H1 (cell line): ENCODE measurements at regions of chr12 and their contacts with region 1.

Region 1: DNA sequence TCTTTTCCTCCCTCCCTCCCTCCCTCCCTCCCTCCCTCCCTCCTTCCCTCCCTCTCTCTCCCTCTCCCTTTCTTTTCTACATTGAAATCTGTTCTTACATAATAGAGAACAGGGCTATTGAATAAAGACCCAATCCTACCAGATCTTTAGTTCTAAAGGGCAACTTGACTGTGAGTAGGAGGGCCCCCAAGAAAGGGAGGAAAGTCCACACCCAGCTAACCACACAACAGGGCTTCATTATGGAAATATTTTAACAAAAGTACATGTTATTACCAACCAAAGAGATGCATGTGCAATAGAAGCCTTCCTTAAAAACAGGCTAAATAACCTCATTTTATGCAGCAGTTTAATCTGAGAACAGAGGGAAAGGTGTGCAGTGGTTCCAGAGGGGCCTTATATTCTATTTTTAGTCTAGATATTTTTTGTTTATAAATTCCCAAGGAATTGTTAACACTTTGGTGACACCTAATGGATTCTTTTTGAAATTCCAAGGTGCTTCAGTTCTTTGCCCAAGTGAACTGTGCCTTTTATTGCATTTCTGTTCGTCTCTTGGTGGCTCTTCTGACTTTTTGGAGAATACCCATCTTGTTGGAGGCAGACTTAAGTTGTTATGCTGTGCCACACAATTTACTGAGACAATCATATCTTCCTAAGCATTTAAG is 63.0 kb downstream of the GNS start:
- DNase-seq: no peak
- H3K4me3 ChIP-seq: no peak overlapping the region
- H3K27ac ChIP-seq: no peak overlapping the region
- H3K4me1 ChIP-seq: peaks cover 4 to 30% (median 20%) of the 10 kb centered on the region in 4 experiments
- H3K27me3 ChIP-seq: no peaks in the 10 kb centered on the region
- CTCF ChIP-seq: peak in 2 of 3 experiments; percentile 5 to 19; a peak in 1 of 4 replicates
- EP300 ChIP-seq: no peak
- POLR2A ChIP-seq: no peak
- RAD21 ChIP-seq: peak; percentile 48 to 60

Region 2: DNA sequence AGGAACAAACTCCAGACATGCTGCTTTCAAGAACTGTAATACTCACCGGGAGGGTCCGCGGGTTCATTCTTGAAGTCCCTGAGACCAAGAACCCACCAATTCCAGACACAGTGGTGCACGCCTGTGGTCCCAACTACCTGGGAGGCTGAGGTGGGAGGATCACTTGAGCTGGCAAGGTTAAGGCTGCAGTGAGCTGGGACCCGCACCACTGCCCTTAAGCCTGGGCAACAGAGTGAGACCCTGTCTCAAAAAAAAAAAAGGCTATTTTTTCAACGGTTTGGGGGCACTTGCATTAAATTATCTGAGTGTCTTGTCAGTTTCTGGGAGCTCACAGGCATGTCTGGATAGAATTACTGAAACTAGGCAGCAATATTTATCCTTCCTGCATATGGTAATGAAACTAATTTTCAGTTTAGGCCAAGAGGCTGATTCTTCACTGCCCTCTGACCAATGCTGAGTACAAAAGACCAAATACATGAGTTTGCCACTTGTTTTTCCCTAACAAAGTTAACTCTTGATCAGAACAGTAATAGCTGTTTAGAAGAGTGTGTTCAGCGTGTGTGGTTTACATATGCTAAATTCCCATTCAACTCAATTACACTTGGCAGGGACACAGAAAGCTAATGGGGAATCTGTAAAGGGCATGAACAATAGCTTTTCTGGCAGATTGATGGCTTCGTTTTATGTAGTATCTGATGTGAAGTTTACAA is 151.7 kb before region 1 on chr12:
- CTCF ChIA-PET with region 1: interaction called, 132 read pairs
- POLR2A ChIA-PET with region 1: no interaction called
- DNase-seq: no peak
- H3K4me3 ChIP-seq: no peak overlapping the region
- H3K27ac ChIP-seq: no peak overlapping the region
- H3K4me1 ChIP-seq: peaks cover 0 to 3% (median 0%) of the 10 kb centered on the region in 4 experiments; a peak in 1 of 7 replicates
- H3K27me3 ChIP-seq: no peaks in the 10 kb centered on the region
- CTCF ChIP-seq: no peak
- EP300 ChIP-seq: no peak
- POLR2A ChIP-seq: no peak
- RAD21 ChIP-seq: no peak

Region 3: DNA sequence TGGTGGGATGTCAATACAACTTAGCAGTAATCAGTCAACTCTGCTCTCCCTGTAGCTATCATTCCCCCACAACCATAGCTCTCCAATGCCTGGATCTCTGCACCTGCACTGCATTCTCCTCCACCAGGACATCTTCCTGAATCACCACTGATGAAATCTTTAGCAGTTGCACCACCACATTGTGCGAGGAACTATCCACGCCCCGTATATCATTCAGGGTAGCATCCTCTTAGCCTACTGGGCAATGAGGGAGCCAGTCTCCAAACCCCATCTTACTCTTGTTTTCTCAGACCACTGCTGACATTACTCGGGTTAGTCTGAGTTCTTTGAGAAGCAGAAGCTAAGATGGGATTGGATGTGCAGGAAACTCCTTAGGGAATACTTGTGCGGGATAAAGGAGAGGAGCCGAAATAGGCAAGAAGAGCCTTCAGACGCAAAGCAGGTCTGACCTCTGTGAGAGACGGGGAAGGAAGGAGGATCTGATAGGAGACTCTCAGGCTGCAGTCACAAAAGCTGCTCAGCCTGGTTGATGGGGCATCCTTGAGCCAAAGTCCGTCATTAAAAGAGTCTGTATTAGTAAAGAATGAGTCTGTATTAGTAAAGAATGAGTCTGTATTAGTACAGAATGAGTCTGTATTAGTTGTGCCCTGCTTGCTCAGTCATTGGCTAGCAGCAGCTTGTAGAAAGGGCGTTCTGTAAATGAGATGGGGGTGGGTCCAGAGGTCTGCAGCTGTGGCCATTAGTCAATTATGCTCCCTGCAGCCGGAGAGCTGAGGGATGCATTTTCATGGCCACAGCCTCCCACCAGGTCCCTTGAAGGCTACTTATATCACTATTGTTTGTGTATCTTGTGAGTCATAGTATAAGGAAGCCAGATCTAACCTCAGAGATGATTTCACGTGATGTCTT is 135.6 kb before region 1 on chr12:
- CTCF ChIA-PET with region 1: interaction called, 32 read pairs
- POLR2A ChIA-PET with region 1: no interaction called
- DNase-seq: peak in 1 of 2 experiments; percentile 46
- H3K4me3 ChIP-seq: no peak overlapping the region
- H3K27ac ChIP-seq: no peak overlapping the region
- H3K4me1 ChIP-seq: peaks cover 0 to 8% (median 2%) of the 10 kb centered on the region in 4 experiments; a peak in 2 of 7 replicates
- H3K27me3 ChIP-seq: no peaks in the 10 kb centered on the region
- CTCF ChIP-seq: no peak
- EP300 ChIP-seq: no peak
- POLR2A ChIP-seq: no peak
- RAD21 ChIP-seq: no peak

Region 4: DNA sequence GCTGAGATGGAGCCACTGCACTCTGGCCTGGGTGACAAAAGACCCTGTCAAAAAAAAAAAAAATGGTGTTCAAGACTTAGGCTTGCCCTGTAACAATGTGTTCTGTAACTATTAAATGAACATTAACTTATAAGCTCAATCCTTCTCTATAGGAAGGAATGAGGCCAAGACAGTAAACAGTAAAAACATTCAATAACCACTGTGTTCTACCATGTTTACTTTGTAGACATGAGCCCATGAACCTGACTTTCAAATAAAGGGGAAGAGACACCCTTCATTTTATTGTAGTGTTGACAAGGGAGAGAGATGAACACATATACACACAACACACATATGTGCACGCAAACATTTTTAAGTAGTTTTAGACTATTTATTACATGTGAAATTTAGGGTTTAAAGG is 106.0 kb before region 1 on chr12:
- CTCF ChIA-PET with region 1: interaction called, 12 read pairs
- POLR2A ChIA-PET with region 1: no interaction called
- DNase-seq: no peak
- H3K4me3 ChIP-seq: no peak overlapping the region
- H3K27ac ChIP-seq: no peak overlapping the region
- H3K4me1 ChIP-seq: no peaks in the 10 kb centered on the region
- H3K27me3 ChIP-seq: no peaks in the 10 kb centered on the region
- CTCF ChIP-seq: no peak
- EP300 ChIP-seq: no peak
- POLR2A ChIP-seq: no peak
- RAD21 ChIP-seq: no peak

Region 5: DNA sequence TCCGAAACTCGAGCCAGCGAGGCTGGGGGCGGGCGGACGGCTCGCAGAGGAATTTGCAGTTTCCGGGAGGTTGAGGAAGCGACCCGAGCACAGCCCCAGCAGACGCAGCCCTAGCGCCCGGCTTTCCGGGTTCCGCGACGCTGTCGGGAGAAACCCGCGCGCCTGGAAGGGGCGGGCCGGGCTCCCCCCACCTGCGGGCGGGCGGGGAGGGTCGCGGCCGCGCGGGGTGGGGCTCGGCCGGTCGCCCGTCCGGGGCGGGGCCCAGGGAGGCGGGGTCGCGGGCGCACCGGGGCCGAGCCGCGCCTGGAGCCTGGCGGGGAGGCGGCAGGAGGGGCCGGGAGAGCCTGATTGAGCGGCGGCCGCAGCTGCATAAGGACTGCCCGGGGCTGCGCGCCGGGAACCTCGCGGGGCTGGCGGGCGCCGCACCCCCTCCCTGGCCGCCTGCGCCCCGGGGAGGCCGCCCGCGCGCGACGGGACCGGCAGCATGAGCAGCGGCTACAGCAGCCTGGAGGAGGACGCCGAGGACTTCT is 86.0 kb before region 1 on chr12 and contains the start of gene RASSF3:
- CTCF ChIA-PET with region 1: interaction called, 19 read pairs
- POLR2A ChIA-PET with region 1: interaction called, 34 read pairs
- DNase-seq: peak in 1 of 2 experiments; percentile 85
- H3K4me3 ChIP-seq: peak within 1 kb of the TSS; percentile 69 to 97 (median 91)
- H3K27ac ChIP-seq: peak within 1 kb of the TSS; percentile 65
- H3K4me1 ChIP-seq: peaks cover 0 to 5% (median 1%) of the 10 kb centered on the region in 4 experiments; a peak in 4 of 7 replicates
- H3K27me3 ChIP-seq: no peaks in the 10 kb centered on the region
- CTCF ChIP-seq: no peak
- EP300 ChIP-seq: no peak
- POLR2A ChIP-seq: no peak; a peak in 1 of 3 replicates
- RAD21 ChIP-seq: no peak
- total RNA-seq, gene RASSF3: 57.3 and 64.3 TPM in 2 replicates

Region 6: DNA sequence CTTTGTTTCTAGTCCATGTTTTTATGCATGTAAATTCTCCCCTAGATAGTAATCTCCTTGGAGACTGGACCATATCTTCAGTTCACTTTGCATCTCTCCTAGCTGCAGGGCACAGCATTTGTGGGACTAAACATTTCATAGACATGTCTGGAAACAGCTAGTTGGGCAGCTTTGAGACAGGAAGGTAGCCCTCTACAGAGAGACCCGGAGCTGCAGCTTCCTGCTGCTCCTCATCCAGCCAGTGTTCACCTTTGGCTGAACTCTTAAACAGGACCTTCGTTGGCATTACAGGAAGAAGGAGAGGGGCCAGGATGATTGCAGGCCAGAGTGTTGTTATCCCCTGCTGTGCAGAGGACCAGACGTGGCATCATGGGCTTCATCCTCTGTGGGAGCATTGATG is 10.1 kb after region 1 on chr12:
- CTCF ChIA-PET with region 1: interaction called, 15 read pairs
- POLR2A ChIA-PET with region 1: interaction called, 3 read pairs
- DNase-seq: no peak
- H3K4me3 ChIP-seq: no peak overlapping the region
- H3K27ac ChIP-seq: no peak overlapping the region
- H3K4me1 ChIP-seq: no peaks in the 10 kb centered on the region
- H3K27me3 ChIP-seq: no peaks in the 10 kb centered on the region
- CTCF ChIP-seq: no peak
- EP300 ChIP-seq: no peak
- POLR2A ChIP-seq: no peak
- RAD21 ChIP-seq: no peak

Region 7: GRCh38 chr12:64826234-64826633 is 130.0 kb after region 1 on chr12:
- CTCF ChIA-PET with region 1: no interaction called
- POLR2A ChIA-PET with region 1: no interaction called
- DNase-seq: peak in 1 of 2 experiments; percentile 86
- H3K4me3 ChIP-seq: peak overlapping the region; percentile 19 to 67 (median 52); a peak in 6 of 8 replicates
- H3K27ac ChIP-seq: no peak overlapping the region
- H3K4me1 ChIP-seq: peaks cover 0 to 17% (median 7%) of the 10 kb centered on the region in 4 experiments; a peak in 4 of 7 replicates
- H3K27me3 ChIP-seq: peaks cover 23 to 44% (median 37%) of the 10 kb centered on the region in 4 experiments
- CTCF ChIP-seq: no peak
- EP300 ChIP-seq: no peak
- POLR2A ChIP-seq: no peak
- RAD21 ChIP-seq: no peak